ENCODE measurements at regions of chr5 and their contacts with region 1.

Region 1: DNA sequence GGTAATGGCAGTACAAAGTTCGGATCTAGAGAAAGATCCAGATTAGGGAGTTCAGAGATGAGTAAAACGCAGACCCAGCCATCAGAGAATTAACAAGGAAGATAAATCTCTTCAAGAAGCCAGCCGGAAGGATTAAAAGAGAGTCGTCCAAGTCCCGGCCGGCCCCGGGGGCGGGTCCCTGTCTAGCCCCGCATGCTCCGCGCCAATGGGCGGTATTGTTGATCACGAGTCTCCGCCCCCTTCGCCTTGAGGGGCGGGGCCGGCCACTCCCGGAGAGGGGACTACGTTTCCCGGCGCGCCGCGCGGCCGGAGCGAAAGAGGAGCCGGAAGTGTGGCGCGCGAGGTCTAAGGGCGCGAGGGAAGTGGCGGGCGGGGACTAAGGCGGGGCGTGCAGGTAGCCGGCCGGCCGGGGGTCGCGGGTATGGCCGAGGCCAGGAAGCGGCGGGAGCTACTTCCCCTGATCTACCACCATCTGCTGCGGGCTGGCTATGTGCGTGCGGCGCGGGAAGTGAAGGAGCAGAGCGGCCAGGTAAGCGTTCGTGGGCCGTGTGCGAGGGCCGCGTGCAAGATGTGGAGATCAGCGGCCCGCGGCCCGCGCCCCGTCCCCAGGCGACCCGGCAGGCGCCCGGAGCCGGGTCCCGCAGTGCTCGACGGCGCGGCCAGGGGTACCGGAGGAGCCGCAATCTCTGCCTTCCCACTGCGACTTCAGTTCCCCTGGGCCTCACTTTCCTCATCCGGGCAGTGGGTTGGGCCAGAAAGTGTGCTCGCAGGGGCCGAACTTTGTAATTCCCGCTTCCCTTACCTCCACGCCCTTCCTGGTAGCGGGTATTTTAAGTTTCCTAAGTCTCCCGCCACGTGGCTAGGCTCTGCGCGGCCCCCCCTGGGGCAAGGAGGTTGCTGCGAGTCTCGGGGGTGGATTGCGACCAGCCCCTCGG is at the start of gene TCOF1:
- DNase-seq: peak; percentile 94 to 97 (median 96)
- H3K4me3 ChIP-seq: peak within 1 kb of the TSS; percentile 66 to 76
- H3K4me3 Mint-ChIP-seq: peak within 1 kb of the TSS; percentile 88 to 93 (median 91)
- H3K27ac ChIP-seq: peak within 1 kb of the TSS; percentile 70
- H3K27ac Mint-ChIP-seq: peak within 1 kb of the TSS; percentile 68 to 98 (median 94)
- H3K4me1 ChIP-seq: peaks cover 28% of the 10 kb centered on the region
- H3K4me1 Mint-ChIP-seq: peaks cover 30 to 59% (median 41%) of the 10 kb centered on the region in 4 donors
- H3K27me3 ChIP-seq: no peaks in the 10 kb centered on the region
- H3K27me3 Mint-ChIP-seq: peaks cover 0 to 1% of the 10 kb centered on the region in 2 donors
- total RNA-seq, gene TCOF1: 53.8 to 59.9 TPM

Region 2: GRCh38 chr5:150000256-150000989 is 357.2 kb before region 1 on chr5 and contains the starts of genes HMGXB3 and TIGD6:
- CTCF ChIA-PET with region 1: no interaction called
- POLR2A ChIA-PET with region 1: no interaction called
- intact Hi-C with region 1: loop called (anchors 1 kb)
- DNase-seq: peak; percentile 75 to 84 (median 79)
- H3K4me3 ChIP-seq: peak within 1 kb of the TSS; percentile 85 to 86
- H3K4me3 Mint-ChIP-seq: peak within 1 kb of the TSS; percentile 94 to 99 (median 97)
- H3K27ac ChIP-seq: peak within 1 kb of the TSS; percentile 80
- H3K27ac Mint-ChIP-seq: peak within 1 kb of the TSS; percentile 81 to 99 (median 97)
- H3K4me1 ChIP-seq: peaks cover 28% of the 10 kb centered on the region
- H3K4me1 Mint-ChIP-seq: peaks cover 34 to 50% (median 44%) of the 10 kb centered on the region in 4 donors
- H3K27me3 ChIP-seq: no peaks in the 10 kb centered on the region
- H3K27me3 Mint-ChIP-seq: no peaks in the 10 kb centered on the region
- total RNA-seq, gene HMGXB3: 35.3 to 35.4 TPM
- total RNA-seq, gene TIGD6: 5.8 to 6.8 TPM

Region 3: DNA sequence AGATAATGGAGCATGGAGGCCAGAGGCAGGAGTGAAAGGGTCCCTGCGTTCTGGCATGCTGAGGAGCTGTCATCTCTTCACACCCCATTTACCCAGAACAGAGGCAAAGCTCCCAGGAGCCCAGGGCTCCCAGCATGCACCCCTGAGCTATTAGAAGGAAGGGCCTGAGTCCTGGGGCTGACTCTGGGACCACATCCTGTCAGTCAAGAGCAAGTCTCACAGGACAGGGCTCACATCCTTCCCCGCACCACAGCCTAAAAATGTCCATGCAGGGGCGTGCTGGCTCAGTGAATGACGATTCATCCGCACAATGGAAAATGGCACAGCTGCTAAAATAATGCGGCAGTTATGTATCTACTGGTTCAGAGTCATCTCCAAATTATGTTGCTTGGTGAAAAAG is 99.5 kb before region 1 on chr5:
- CTCF ChIA-PET with region 1: no interaction called
- POLR2A ChIA-PET with region 1: no interaction called
- intact Hi-C with region 1: no loop called
- DNase-seq: no peak
- H3K4me3 ChIP-seq: no peak overlapping the region
- H3K4me3 Mint-ChIP-seq: no peak overlapping the region
- H3K27ac ChIP-seq: no peak overlapping the region
- H3K27ac Mint-ChIP-seq: no peak overlapping the region
- H3K4me1 ChIP-seq: no peaks in the 10 kb centered on the region
- H3K4me1 Mint-ChIP-seq: no peaks in the 10 kb centered on the region
- H3K27me3 ChIP-seq: no peaks in the 10 kb centered on the region
- H3K27me3 Mint-ChIP-seq: peaks cover 0 to 2% of the 10 kb centered on the region in 2 donors

Region 4: DNA sequence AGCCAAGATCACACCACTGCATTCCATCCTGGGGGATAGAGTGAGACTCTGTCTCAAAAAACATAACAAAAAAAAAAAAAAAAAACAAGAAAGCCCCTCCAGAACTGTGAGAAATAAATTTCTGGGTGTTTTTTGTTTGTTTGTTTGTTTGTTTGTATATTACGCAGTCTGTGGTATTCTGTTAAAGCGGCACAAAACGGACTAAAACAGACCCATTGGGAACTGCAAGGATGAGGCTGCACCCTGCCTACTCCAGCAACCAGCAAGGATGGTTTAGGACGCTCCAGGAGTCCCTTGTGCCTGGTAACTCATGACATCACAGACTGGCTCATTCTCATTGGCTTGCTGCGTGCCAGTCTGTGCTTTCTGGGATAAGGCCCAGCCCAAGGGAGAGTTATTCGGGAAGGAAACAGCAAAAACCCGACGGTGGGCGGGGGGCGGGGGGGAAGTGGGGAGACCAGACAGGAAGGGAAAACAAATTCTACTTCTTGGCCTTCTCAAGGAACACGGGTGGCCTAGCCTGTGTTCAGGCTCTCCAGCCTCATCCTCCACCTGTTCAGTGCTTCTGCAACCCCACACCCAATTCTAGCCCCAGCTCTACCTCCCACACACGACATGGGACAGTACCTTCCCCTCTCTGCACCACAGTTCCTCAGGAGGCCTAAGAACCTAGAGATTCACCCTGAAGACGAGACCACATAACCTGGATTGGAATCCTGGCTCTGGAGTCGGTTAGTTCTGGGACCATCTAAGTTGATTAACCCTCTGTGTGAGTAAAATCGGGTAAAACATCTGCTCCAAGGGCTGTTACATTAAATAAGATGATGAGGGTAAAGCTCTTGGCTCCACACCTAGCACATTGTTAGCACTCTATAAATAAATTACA is 52.3 kb after region 1 on chr5:
- CTCF ChIA-PET with region 1: no interaction called
- POLR2A ChIA-PET with region 1: interaction called, 9 read pairs
- intact Hi-C with region 1: loop called (anchors 1 kb)
- DNase-seq: peak in 4 of 5 donors; percentile 34 to 54 (median 48)
- H3K4me3 ChIP-seq: peak overlapping the region; percentile 34 to 78
- H3K4me3 Mint-ChIP-seq: peak overlapping the region; percentile 97 to 100 (median 99)
- H3K27ac ChIP-seq: peak overlapping the region; percentile 98
- H3K27ac Mint-ChIP-seq: peak overlapping the region; percentile 99 to 100 (median 99)
- H3K4me1 ChIP-seq: peaks cover 50% of the 10 kb centered on the region
- H3K4me1 Mint-ChIP-seq: peaks cover 26 to 57% (median 38%) of the 10 kb centered on the region in 4 donors
- H3K27me3 ChIP-seq: no peaks in the 10 kb centered on the region
- H3K27me3 Mint-ChIP-seq: no peaks in the 10 kb centered on the region

Region 5: GRCh38 chr5:150449517-150450339 is 92.1 kb after region 1 on chr5 and contains the start of gene RPS14:
- CTCF ChIA-PET with region 1: interaction called, 7 read pairs
- POLR2A ChIA-PET with region 1: interaction called, 9 read pairs
- intact Hi-C with region 1: loop called (anchors 1 kb)
- DNase-seq: peak; percentile 96 to 98 (median 97)
- H3K4me3 ChIP-seq: peak within 1 kb of the TSS; percentile 87 to 99
- H3K4me3 Mint-ChIP-seq: peak within 1 kb of the TSS; percentile 92 to 100 (median 98)
- H3K27ac ChIP-seq: peak within 1 kb of the TSS; percentile 99
- H3K27ac Mint-ChIP-seq: peak within 1 kb of the TSS; percentile 99 to 100 (median 100)
- H3K4me1 ChIP-seq: peaks cover 28% of the 10 kb centered on the region
- H3K4me1 Mint-ChIP-seq: peaks cover 15 to 46% (median 36%) of the 10 kb centered on the region in 4 donors
- H3K27me3 ChIP-seq: no peaks in the 10 kb centered on the region
- H3K27me3 Mint-ChIP-seq: no peaks in the 10 kb centered on the region
- total RNA-seq, gene RPS14: 5,260 to 5,575 TPM

Measured in CD4-positive, alpha-beta memory T cell (primary cell).